ENCODE measurements at regions of chr1 and their contacts with region 1.

Region 1: GRCh38 chr1:150259758-150260669 is 2.4 kb downstream of the CA14 start:
- DNase-seq: peak; percentile 33
- H3K4me3 ChIP-seq: no peak overlapping the region
- H3K27ac ChIP-seq: no peak overlapping the region
- H3K4me1 ChIP-seq: peaks cover 47% of the 10 kb centered on the region
- H3K27me3 ChIP-seq: no peaks in the 10 kb centered on the region
- CTCF ChIP-seq: no peak

Region 2: GRCh38 chr1:150148837-150149270 is 111.2 kb before region 1 on chr1:
- CTCF ChIA-PET with region 1: no interaction called
- POLR2A ChIA-PET with region 1: no interaction called
- intact Hi-C with region 1: no loop called
- DNase-seq: no peak
- H3K4me3 ChIP-seq: peak overlapping the region; percentile 96
- H3K27ac ChIP-seq: peak overlapping the region; percentile 96
- H3K4me1 ChIP-seq: peaks cover 23% of the 10 kb centered on the region
- H3K27me3 ChIP-seq: no peaks in the 10 kb centered on the region
- CTCF ChIP-seq: no peak

Region 3: DNA sequence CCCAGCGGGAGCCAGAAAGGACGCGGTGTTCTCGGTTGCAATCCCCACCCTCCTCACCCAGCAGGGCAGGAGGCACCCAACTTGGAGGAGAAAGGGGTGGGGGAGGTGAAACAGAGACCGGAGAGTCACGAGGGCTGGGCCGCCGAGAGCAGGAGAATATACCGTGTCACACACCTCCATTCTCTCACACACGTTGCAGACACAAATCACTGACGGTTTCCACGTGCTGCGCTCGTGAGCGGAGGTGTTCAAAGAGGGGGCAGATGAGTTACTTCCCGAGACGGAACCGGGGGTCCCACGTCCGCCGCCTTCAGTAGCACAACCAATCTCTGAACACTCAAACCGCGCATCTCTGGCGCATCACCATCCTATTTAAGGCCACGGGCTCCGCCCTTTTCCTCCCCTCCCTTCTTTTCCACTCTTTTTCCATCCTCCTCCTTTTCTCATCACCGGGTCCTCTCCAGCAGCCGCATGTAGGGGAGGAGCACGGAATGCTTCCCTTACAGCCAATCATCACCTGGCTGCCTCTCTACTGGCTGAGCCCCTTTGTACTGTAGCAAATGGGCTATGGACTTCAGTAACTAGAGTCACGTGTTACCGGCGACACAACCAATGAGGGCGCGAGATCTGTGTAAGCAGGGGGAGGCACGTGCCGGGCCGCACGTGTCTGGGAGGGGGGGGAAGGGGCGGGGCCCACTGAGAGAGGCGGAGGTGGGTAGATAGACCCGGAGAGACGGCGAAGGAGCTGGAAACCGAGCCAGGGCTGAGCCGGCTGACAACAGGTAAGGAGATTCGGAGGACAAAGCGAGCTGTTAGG is 22.0 kb after region 1 on chr1 and contains the start of gene CIART:
- CTCF ChIA-PET with region 1: interaction called, 24 read pairs
- POLR2A ChIA-PET with region 1: interaction called, 3 read pairs
- intact Hi-C with region 1: loop called (anchors 1 kb)
- DNase-seq: peak; percentile 99
- H3K4me3 ChIP-seq: peak within 1 kb of the TSS; percentile 43
- H3K27ac ChIP-seq: peak within 1 kb of the TSS; percentile 21
- H3K4me1 ChIP-seq: peaks cover 19% of the 10 kb centered on the region
- H3K27me3 ChIP-seq: no peaks in the 10 kb centered on the region
- CTCF ChIP-seq: no peak
- total RNA-seq, gene CIART: 3.5 and 4.9 TPM in 2 replicates

Region 4: DNA sequence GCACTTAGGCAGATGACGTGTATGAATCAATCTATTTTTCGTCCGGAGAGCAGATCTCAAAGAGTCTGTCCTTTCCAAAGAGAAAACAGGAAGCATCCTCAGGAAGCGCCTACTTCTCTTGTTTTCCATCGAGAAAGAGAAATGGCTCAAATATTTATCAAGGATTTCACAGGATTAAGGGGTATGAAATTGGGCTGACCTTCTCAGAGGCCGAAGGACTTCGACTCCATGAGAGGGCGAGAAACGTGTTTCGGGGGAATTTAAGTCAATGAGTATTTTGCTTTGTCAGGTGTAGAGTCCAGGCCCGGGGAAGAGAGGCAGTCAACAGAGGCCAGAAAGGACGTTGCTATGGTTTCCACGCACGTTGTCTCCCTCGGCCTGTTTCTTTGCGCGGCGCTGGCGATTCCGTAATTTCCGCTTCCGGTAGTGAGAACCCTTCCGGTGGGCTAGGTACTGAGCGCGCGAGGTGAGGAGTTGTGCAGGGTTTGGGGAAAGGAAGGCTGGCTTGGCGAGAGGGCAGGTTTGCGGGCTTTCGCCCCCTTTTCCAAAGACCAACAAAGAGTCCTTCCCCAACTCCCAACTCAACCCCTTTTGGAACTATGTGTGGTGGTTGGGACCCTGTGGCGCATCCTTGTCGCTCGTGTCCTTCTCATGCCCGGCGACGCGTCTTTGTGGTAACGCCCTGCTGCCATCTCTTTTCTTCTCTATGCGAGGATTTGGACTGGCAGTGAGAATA is 33.6 kb after region 1 on chr1 and contains the start of gene MRPS21:
- CTCF ChIA-PET with region 1: no interaction called
- POLR2A ChIA-PET with region 1: no interaction called
- intact Hi-C with region 1: no loop called
- DNase-seq: peak; percentile 96
- H3K4me3 ChIP-seq: peak within 1 kb of the TSS; percentile 68
- H3K27ac ChIP-seq: peak within 1 kb of the TSS; percentile 62
- H3K4me1 ChIP-seq: peaks cover 20% of the 10 kb centered on the region
- H3K27me3 ChIP-seq: no peaks in the 10 kb centered on the region
- CTCF ChIP-seq: no peak
- total RNA-seq, gene MRPS21: 88.5 and 96.3 TPM in 2 replicates

Region 5: DNA sequence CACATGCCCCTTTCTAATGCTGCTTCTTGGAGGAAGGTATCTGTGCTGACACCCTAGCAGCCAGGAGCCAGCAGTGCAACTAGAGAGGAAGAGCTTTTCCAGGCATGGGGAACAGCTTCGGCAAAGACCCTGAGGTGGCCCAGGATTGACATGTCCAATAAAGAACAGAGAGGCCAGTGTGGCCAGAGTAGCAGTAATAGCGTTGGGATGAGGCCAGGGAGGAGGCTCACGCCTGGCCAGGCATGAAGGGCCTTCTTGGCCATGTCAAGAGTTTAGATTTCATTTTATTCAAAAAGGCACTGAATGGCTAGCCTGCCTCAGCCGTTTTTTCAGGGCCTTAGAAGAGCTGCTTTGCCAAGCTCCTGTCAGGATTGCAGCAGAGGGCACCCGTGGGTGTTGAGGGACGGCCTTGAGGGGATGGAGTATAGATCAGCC is 272.9 kb after region 1 on chr1:
- CTCF ChIA-PET with region 1: interaction called, 4 read pairs
- POLR2A ChIA-PET with region 1: no interaction called
- intact Hi-C with region 1: loop called (anchors 5 kb)
- DNase-seq: no peak
- H3K4me3 ChIP-seq: no peak overlapping the region
- H3K27ac ChIP-seq: no peak overlapping the region
- H3K4me1 ChIP-seq: no peaks in the 10 kb centered on the region
- H3K27me3 ChIP-seq: no peaks in the 10 kb centered on the region
- CTCF ChIP-seq: 0 out of 2 replicates have a peak, but pooled peaks have one; percentile 5

Region 6: GRCh38 chr1:150995896-150996295 is 735.9 kb after region 1 on chr1:
- CTCF ChIA-PET with region 1: no interaction called
- POLR2A ChIA-PET with region 1: no interaction called
- intact Hi-C with region 1: loop called (anchors 5 kb)
- DNase-seq: peak; percentile 31
- H3K4me3 ChIP-seq: no peak overlapping the region
- H3K27ac ChIP-seq: no peak overlapping the region
- H3K4me1 ChIP-seq: no peaks in the 10 kb centered on the region
- H3K27me3 ChIP-seq: no peaks in the 10 kb centered on the region
- CTCF ChIP-seq: peak; percentile 75

Measured in A673 (cell line).